ENCODE measurements at regions of chr6 and their contacts with region 1.

Region 1: DNA sequence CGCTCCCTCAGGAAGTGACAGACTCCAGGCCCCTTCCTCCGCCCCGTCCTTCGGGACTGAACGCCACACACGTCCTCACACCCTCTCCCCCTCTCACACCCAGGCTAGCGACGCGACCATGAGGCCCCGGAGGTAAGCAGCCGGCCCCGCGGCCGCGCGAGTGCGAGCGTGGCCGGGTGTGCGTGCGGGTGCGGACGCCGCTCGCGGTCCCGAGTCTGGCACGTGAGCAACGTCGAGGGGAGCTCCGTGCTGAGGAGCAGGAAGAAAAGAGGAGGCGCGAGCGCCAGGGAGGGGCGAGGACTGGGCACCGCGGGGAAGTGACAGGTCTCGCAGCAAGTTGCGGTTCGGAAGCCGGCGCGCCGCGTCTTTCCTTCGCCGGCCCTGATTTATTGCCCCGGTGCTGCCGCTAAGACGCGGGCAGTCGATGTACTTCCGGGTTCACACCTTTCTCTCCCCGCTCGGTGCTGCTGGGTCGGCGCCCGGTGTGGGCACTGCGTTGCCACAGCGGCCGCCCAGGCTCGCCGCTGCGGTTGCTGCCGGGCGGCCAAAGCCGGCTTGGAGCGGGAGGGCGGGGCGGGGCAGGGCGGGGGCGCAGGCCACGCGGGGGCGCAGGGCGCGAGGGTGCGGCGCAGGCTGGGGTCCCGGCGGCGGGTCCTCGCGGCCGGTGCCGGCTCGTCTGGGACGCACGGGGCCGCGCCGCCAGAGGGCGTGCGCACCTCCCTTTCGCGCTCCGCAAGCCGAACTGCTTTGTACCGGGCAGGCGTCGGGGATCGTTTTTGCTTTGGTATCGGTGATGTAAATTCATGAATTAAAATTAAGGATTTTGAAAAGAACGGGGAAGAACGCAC is 15.8 kb upstream of the LIN28B start:
- DNase-seq: peak; percentile 32 to 63
- ATAC-seq: peak; percentile 55 to 81 (median 58)
- H3K4me3 ChIP-seq: peak overlapping the region; percentile 67
- H3K27ac ChIP-seq: no peak overlapping the region
- H3K4me1 ChIP-seq: peaks cover 4% of the 10 kb centered on the region
- H3K27me3 ChIP-seq: peaks cover 17 to 74% (median 21%) of the 10 kb centered on the region in 3 donors
- CTCF ChIP-seq: peak; percentile 57

Region 2: DNA sequence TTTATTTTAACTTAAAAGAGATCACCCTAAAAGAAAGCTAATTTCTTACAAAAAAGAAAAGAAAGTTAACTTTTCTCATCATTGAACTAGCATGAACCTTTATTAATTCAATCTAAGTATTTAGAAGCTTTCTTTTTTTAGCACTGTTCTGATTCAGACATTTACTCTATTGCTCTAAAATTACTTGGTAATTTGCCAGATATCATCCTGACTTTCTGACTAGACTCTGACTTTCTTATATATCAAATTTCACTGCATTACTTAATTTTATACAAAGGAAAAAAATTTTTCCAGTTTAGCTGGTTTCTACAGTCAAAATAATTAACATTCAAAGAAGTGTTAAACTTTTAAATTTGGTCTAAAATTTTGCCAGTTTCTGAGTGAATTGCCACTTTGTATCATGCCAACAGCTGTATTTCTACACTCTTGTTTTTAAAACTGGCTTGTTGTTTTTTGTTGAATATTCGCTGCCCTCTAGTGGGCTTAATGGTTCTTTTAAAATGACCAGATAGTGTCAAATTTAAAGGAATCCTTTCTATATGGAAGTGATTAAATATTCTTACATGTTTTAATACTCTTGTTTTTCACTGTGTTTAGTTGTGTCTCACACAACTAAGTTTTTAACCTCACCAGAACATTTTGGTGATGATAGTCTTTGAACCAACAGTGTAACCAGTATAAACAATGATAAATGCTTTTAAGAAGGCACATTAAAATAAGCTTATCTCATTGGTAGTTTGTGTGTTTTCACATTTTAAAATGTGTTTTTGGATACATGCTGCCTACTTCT is 136.7 kb after region 1 on chr6:
- intact Hi-C with region 1: loop called in 1 of 2 experiments (anchors 2 kb)
- DNase-seq: no peak
- ATAC-seq: no peak
- H3K4me3 ChIP-seq: no peak overlapping the region
- H3K27ac ChIP-seq: no peak overlapping the region
- H3K4me1 ChIP-seq: no peaks in the 10 kb centered on the region
- H3K27me3 ChIP-seq: no peaks in the 10 kb centered on the region
- CTCF ChIP-seq: peak; percentile 48

Measured in psoas muscle (tissue), 8 donors.